HEK293T (cell line): ENCODE measurements at regions of chr21 and their contacts with region 1.

Region 1: DNA sequence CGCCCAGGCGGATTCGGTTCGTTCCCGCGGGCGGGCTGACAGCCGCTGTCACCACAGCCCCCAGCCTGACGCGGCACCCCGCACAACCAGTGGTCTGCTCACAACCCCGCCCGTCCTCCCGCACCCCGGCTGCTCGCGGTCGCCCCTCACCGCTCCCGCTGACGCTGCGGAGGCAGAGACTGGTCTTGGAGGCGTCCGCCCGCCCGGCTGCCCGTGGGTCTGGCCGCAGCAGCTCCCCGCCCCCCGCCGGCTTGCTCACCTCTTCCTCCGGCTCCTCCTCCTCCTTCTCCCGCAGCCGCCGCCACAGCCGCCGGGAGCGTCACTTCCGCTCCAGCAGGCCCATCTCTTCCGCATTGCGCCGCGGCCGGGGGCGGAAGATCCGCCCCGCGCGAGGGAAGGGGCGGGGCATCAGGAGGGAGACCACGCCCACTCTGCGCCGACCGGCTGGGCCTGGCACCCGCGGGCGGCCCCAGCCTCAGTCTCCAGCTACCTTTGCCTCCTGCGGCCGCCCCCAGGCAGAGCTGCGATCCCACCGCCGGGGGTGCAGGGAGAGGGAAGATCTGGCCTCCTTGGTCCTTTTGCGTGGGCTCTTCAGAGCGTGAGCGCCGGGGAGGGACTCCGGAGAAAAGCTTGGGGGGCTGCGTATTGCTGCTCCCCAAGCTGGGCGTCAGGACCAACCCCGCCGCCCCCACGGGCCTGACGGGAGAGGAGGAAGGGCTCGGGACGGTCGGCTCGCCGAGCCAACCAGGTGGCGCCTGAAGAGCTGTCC is at the start of gene SYNJ1:
- DNase-seq: peak; percentile 98

Region 2: DNA sequence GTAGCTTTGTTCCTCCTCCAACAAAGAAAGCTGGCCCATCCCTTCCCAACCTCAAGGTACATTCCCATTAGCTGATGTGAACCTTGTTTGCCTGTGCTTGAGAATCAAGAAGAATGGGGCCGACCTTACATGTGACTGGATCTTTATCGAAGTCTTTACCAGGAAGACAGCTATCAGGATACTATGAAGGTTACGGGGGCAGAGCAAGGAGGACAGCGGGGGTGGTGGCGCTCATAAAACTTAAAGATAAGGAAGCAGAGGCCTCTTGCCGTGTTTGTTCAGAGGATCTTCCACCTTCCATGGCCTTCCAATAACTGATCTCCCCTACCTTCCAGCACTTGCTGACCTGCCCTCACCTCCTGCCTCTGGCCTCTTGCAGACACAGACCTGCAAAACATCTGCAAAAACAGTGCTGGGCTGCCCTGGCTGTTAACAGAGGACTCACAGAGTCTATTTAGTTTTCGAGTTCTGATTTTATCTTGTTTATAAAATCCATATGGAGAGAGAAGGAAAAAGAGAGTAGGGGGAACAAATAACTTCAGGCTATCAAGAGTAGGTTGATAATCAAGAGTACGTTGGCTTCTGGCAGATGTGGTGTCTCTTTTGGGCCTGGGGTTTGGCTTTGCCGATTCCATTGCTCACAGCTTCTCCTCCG is 657.1 kb before region 1 on chr21:
- CTCF ChIA-PET with region 1: no interaction called
- POLR2A ChIA-PET with region 1: no interaction called
- DNase-seq: no peak

Region 3: DNA sequence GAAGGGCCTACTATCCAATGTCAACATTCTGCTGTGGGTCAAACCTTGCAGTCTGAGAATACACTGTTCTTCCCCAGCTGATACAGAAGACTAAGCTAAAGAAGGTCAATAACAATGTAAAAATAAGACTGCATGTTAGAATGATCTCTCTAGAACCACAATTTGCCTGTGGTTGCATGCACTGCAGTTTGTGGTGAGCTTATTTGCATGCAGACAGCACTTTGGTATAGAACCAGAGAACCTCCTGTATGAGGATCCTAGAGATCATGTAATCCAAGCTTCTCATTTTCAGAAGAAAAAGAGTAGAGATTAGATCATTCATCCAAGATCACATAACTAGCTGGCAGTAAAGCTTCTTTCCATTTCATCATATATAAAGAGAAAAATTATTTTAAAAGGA is 15.8 kb before region 1 on chr21:
- CTCF ChIA-PET with region 1: interaction called, 3 read pairs
- POLR2A ChIA-PET with region 1: interaction called, 11 read pairs
- DNase-seq: no peak

Region 4: GRCh38 chr21:32770871-32771523 is 43.1 kb after region 1 on chr21:
- CTCF ChIA-PET with region 1: interaction called, 5 read pairs
- POLR2A ChIA-PET with region 1: interaction called, 32 read pairs
- DNase-seq: peak; percentile 65